ENCODE measurements at regions of chr20 and their contacts with region 1.

Region 1: GRCh38 chr20:58236612-58237330 is 8.3 kb upstream of the ANKRD60 start:
- DNase-seq: peak; percentile 33 to 52 (median 40)
- H3K4me3 ChIP-seq: peak overlapping the region; percentile 52 to 85 (median 68)
- H3K4me3 Mint-ChIP-seq: peak overlapping the region; percentile 92 to 93
- H3K27ac ChIP-seq: peak overlapping the region in 1 of 2 donors; percentile 32
- H3K27ac Mint-ChIP-seq: peak overlapping the region in 6 of 7 donors; percentile 25 to 66 (median 48)
- H3K4me1 ChIP-seq: peaks cover 6 to 7% of the 10 kb centered on the region in 2 donors
- H3K4me1 Mint-ChIP-seq: peaks cover 7% of the 10 kb centered on the region
- H3K27me3 ChIP-seq: peaks cover 0 to 4% of the 10 kb centered on the region in 2 donors
- H3K27me3 Mint-ChIP-seq: peaks cover 3 to 10% (median 8%) of the 10 kb centered on the region in 3 donors
- CTCF ChIP-seq: peak; percentile 97

Region 2: GRCh38 chr20:58447511-58448391 is 211.0 kb after region 1 on chr20:
- intact Hi-C with region 1: loop called (anchors 5 to 10 kb)
- DNase-seq: peak in 1 of 3 donors; percentile 12
- H3K4me3 ChIP-seq: no peak overlapping the region
- H3K4me3 Mint-ChIP-seq: no peak overlapping the region
- H3K27ac ChIP-seq: no peak overlapping the region
- H3K27ac Mint-ChIP-seq: no peak overlapping the region
- H3K4me1 ChIP-seq: no peaks in the 10 kb centered on the region
- H3K4me1 Mint-ChIP-seq: no peaks in the 10 kb centered on the region
- H3K27me3 ChIP-seq: no peaks in the 10 kb centered on the region
- H3K27me3 Mint-ChIP-seq: no peaks in the 10 kb centered on the region
- CTCF ChIP-seq: peak; percentile 42

Region 3: DNA sequence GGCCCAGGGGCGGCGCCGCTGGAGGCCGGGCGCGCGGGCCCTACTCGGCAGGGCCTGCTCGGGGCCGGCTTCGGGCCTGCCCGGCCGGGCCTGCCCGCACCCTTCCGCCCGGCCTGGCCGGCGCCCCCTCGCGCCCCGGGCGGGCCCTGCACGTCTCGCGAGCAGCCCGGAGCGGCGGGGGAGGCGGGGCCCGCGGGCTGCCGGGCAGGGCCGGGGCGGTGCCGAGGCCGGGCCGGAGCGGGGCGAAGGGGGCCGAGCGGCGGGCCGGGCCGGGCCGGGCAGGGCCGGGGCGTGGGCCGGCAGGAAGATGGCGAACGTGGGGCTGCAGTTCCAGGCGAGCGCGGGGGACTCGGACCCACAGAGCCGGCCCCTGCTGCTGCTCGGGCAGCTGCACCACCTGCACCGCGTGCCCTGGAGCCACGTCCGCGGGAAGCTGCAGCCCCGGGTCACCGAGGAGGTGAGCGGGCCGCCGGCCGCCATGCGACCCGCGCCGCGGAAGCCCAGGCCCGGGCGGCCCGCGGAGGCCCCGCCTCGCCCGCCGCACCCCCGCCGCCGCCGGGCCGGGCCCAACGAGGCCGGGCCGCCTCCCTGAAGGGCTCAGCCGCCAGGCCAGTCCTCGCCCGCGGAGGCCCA is 455.9 kb after region 1 on chr20 and contains the start of gene NPEPL1:
- intact Hi-C with region 1: loop called in 1 of 2 experiments (anchors 5 kb)
- DNase-seq: peak; percentile 55 to 78 (median 72)
- H3K4me3 ChIP-seq: peak within 1 kb of the TSS; percentile 38 to 75 (median 53)
- H3K4me3 Mint-ChIP-seq: peak within 1 kb of the TSS; percentile 80 to 84
- H3K27ac ChIP-seq: peak within 1 kb of the TSS; percentile 99
- H3K27ac Mint-ChIP-seq: peak within 1 kb of the TSS; percentile 99
- H3K4me1 ChIP-seq: peaks cover 47 to 61% of the 10 kb centered on the region in 2 donors
- H3K4me1 Mint-ChIP-seq: peaks cover 34% of the 10 kb centered on the region
- H3K27me3 ChIP-seq: no peaks in the 10 kb centered on the region
- H3K27me3 Mint-ChIP-seq: peaks cover 0 to 4% (median 2%) of the 10 kb centered on the region in 3 donors
- CTCF ChIP-seq: no peak
- polyA plus RNA-seq, gene NPEPL1: 37.6 to 109 (median 39.6) TPM

Measured in CD14-positive monocyte (primary cell).